ENCODE measurements at regions of chr15 and their contacts with region 1.

Region 1: DNA sequence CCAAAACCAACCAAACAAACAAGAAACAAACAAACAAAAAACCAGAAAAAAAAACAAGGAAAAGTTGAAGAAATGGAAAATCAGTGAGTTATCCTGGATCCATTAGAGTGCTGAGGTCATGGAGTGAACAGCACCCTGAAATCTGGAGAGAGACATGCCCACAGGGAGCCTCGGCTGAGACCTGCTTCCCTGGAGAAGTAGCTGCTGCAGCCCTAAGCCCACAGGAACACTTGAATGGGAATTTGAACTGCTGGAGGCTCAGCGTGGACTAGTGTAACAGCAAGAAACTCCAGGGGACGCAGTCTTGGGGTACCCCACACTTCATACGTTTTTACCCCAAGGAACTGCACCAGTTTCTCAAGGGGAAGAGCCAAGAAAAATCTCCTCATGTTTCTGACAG is 144.1 kb upstream of the UBE3A start:
- DNase-seq: no peak
- H3K4me3 ChIP-seq: no peak overlapping the region
- H3K27ac ChIP-seq: no peak overlapping the region
- H3K4me1 ChIP-seq: no peaks in the 10 kb centered on the region
- H3K27me3 ChIP-seq: no peaks in the 10 kb centered on the region
- CTCF ChIP-seq: no peak
- POLR2A ChIP-seq: no peak

Region 2: DNA sequence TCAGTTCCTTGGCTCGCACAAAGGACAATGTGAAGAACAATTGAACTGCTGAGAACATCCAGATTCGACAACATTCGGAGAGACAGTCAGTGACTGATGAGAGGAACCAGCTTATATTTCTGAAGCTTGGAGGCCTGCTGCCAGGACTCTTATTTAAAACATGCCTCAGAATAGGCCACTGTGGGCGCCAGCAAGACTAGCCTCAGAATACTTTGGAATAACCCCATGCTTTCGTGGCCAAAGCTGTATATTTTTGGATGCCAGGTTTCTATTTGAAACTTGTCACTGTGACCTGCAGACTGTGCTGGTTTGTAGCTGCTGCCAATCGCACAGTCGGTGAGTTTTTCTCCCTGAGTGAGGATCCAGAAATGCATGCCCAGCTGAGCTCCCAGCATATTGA is 14.1 kb before region 1 on chr15:
- intact Hi-C with region 1: no loop called
- DNase-seq: no peak
- H3K4me3 ChIP-seq: no peak overlapping the region
- H3K27ac ChIP-seq: no peak overlapping the region
- H3K4me1 ChIP-seq: no peaks in the 10 kb centered on the region
- H3K27me3 ChIP-seq: no peaks in the 10 kb centered on the region
- CTCF ChIP-seq: no peak
- POLR2A ChIP-seq: no peak

Region 3: GRCh38 chr15:27479296-27480140 is 1896.6 kb after region 1 on chr15:
- intact Hi-C with region 1: loop called (anchors 10 kb)
- DNase-seq: peak in 1 of 2 donors; percentile 69
- H3K4me3 ChIP-seq: no peak overlapping the region
- H3K27ac ChIP-seq: peak overlapping the region; percentile 25 to 59
- H3K4me1 ChIP-seq: no peaks in the 10 kb centered on the region
- H3K27me3 ChIP-seq: no peaks in the 10 kb centered on the region
- CTCF ChIP-seq: no peak
- POLR2A ChIP-seq: no peak

Measured in breast epithelium (tissue), 4 donors.